Activated naive CD4-positive, alpha-beta T cell treated with anti-CD3 and anti-CD28 coated beads for 36 hours (primary cell): ENCODE measurements at regions of chr7 and their contacts with region 1.

Region 1: DNA sequence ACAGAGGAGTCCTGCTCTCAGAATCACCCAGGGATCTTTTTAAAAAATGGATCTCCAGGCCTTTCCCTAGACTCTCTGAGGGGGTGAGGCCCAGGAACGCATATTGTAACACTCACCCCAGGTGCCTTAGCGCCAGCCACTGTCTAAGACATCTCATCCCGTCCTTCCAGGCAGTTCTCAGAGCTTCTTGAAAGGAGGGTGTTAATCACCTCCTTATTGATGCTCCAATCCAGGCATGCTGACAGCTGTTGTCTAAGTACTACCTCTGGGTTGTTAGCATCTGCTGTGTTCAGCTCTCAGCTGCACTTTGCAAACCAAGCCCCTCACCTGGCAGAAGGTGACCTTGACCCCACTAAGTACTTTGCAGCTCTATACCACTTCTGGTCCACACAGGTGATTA is 36.0 kb downstream of the KIAA1549 start:
- DNase-seq: no peak
- H3K4me3 Mint-ChIP-seq: no peak overlapping the region
- H3K27ac Mint-ChIP-seq: no peak overlapping the region
- H3K4me1 Mint-ChIP-seq: no peaks in the 10 kb centered on the region
- H3K27me3 Mint-ChIP-seq: no peaks in the 10 kb centered on the region

Region 2: GRCh38 chr7:138837627-138838026 is 107.5 kb before region 1 on chr7:
- CTCF ChIA-PET with region 1: no interaction called
- intact Hi-C with region 1: no loop called
- DNase-seq: no peak
- H3K4me3 Mint-ChIP-seq: no peak overlapping the region
- H3K27ac Mint-ChIP-seq: no peak overlapping the region
- H3K4me1 Mint-ChIP-seq: no peaks in the 10 kb centered on the region
- H3K27me3 Mint-ChIP-seq: peaks cover 6% of the 10 kb centered on the region

Region 3: GRCh38 chr7:138929969-138930368 is 15.2 kb before region 1 on chr7:
- CTCF ChIA-PET with region 1: no interaction called
- intact Hi-C with region 1: loop called (anchors 2 kb)
- DNase-seq: no peak
- H3K4me3 Mint-ChIP-seq: no peak overlapping the region
- H3K27ac Mint-ChIP-seq: no peak overlapping the region
- H3K4me1 Mint-ChIP-seq: peaks cover 6% of the 10 kb centered on the region
- H3K27me3 Mint-ChIP-seq: no peaks in the 10 kb centered on the region

Region 4: DNA sequence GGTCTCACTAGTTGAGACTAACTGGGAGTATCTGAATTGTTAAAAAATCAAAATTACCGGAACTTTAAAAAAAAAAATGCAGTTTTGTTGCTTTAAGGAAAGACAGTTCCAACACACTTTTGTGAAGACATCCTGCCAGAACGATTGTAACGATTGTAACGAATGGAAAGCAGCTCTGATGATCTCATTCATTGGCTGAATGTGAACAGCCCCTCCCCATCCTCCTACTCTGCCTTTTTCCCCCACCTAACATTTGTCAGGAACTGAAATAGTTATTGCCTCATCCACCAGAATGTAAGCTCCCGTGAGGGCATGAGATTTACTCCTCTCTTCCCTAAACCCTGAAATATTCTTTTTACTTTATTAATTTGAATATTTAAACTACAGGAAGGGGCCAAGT is 113.8 kb after region 1 on chr7:
- CTCF ChIA-PET with region 1: no interaction called
- intact Hi-C with region 1: no loop called
- DNase-seq: no peak
- H3K4me3 Mint-ChIP-seq: no peak overlapping the region
- H3K27ac Mint-ChIP-seq: peak overlapping the region; percentile 86
- H3K4me1 Mint-ChIP-seq: peaks cover 73% of the 10 kb centered on the region
- H3K27me3 Mint-ChIP-seq: no peaks in the 10 kb centered on the region

Region 5: GRCh38 chr7:139777948-139778841 is 833.0 kb after region 1 on chr7 and contains the start of gene HIPK2:
- CTCF ChIA-PET with region 1: no interaction called
- intact Hi-C with region 1: no loop called
- DNase-seq: peak; percentile 68
- H3K4me3 Mint-ChIP-seq: peak within 1 kb of the TSS; percentile 96
- H3K27ac Mint-ChIP-seq: peak within 1 kb of the TSS; percentile 84
- H3K4me1 Mint-ChIP-seq: peaks cover 36% of the 10 kb centered on the region
- H3K27me3 Mint-ChIP-seq: peaks cover 14% of the 10 kb centered on the region
- total RNA-seq, gene HIPK2: 16.8 to 17.3 TPM